Mammary epithelial cell (primary cell): ENCODE measurements at regions of chr15 and their contacts with region 1.

Region 1: GRCh38 chr15:84588053-84588874 is 12.5 kb upstream of the ZSCAN2 start:
- DNase-seq: peak; percentile 71
- H3K4me3 ChIP-seq: peak overlapping the region in 2 of 3 experiments; percentile 25 to 33
- H3K27ac ChIP-seq: no peak overlapping the region
- H3K4me1 ChIP-seq: peaks cover 13% of the 10 kb centered on the region
- H3K27me3 ChIP-seq: no peaks in the 10 kb centered on the region
- CTCF ChIP-seq: peak; percentile 36 to 81

Region 2: GRCh38 chr15:84633311-84634227 is 45.3 kb after region 1 on chr15:
- CTCF ChIA-PET with region 1: interaction called, 5 read pairs
- dilution Hi-C with region 1: no loop called
- in situ Hi-C with region 1: no loop called
- intact Hi-C with region 1: loop called (anchors 1 kb)
- DNase-seq: peak; percentile 79
- H3K4me3 ChIP-seq: peak overlapping the region; percentile 39 to 67 (median 66)
- H3K27ac ChIP-seq: peak overlapping the region; percentile 47
- H3K4me1 ChIP-seq: peaks cover 11% of the 10 kb centered on the region
- H3K27me3 ChIP-seq: no peaks in the 10 kb centered on the region
- CTCF ChIP-seq: no peak

Region 3: GRCh38 chr15:84871428-84872305 is 283.4 kb after region 1 on chr15:
- CTCF ChIA-PET with region 1: no interaction called
- dilution Hi-C with region 1: no loop called
- in situ Hi-C with region 1: loop called (anchors 10 to 25 kb)
- intact Hi-C with region 1: no loop called
- DNase-seq: no peak
- H3K4me3 ChIP-seq: no peak overlapping the region
- H3K27ac ChIP-seq: no peak overlapping the region
- H3K4me1 ChIP-seq: no peaks in the 10 kb centered on the region
- H3K27me3 ChIP-seq: no peaks in the 10 kb centered on the region
- CTCF ChIP-seq: no peak

Region 4: GRCh38 chr15:84929744-84930371 is 341.6 kb after region 1 on chr15:
- CTCF ChIA-PET with region 1: interaction called, 6 read pairs
- dilution Hi-C with region 1: no loop called
- in situ Hi-C with region 1: loop called in 1 of 2 experiments (anchors 10 kb)
- intact Hi-C with region 1: loop called (anchors 1 kb)
- DNase-seq: peak; percentile 98
- H3K4me3 ChIP-seq: no peak overlapping the region
- H3K27ac ChIP-seq: peak overlapping the region; percentile 11
- H3K4me1 ChIP-seq: peaks cover 13% of the 10 kb centered on the region
- H3K27me3 ChIP-seq: no peaks in the 10 kb centered on the region
- CTCF ChIP-seq: no peak

Region 5: DNA sequence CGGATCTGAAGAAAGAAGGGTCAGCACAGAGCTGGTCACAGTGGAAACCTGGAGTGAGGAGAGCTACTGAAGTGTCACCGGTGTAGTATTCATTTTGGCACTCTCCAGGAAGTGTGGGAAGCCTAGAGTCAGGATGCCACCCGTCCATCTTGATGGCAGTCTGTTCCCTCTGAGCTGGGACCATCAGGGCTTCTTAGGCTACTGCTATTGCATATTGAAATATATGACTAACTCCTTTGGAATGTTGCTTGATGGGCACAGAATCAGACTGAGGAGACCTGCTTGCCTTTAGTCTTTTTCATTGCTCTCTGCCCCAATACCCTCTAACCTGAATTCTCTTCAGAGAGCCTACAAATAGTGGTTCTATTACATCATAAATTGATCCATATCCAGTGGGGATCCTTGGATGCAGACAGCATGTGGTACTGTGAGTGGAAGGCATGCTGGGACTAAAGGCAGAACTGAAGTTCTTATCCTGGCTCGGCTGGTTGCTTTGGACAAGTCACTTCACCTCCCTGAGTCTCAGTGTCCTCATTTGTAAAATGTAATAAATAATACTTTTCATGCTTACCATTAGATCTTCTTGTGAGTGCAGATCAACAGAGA is 536.9 kb after region 1 on chr15:
- CTCF ChIA-PET with region 1: no interaction called
- dilution Hi-C with region 1: no loop called
- in situ Hi-C with region 1: loop called in 1 of 2 experiments (anchors 25 kb)
- intact Hi-C with region 1: no loop called
- DNase-seq: peak; percentile 41
- H3K4me3 ChIP-seq: no peak overlapping the region
- H3K27ac ChIP-seq: no peak overlapping the region
- H3K4me1 ChIP-seq: peaks cover 14% of the 10 kb centered on the region
- H3K27me3 ChIP-seq: no peaks in the 10 kb centered on the region
- CTCF ChIP-seq: no peak

Region 6: DNA sequence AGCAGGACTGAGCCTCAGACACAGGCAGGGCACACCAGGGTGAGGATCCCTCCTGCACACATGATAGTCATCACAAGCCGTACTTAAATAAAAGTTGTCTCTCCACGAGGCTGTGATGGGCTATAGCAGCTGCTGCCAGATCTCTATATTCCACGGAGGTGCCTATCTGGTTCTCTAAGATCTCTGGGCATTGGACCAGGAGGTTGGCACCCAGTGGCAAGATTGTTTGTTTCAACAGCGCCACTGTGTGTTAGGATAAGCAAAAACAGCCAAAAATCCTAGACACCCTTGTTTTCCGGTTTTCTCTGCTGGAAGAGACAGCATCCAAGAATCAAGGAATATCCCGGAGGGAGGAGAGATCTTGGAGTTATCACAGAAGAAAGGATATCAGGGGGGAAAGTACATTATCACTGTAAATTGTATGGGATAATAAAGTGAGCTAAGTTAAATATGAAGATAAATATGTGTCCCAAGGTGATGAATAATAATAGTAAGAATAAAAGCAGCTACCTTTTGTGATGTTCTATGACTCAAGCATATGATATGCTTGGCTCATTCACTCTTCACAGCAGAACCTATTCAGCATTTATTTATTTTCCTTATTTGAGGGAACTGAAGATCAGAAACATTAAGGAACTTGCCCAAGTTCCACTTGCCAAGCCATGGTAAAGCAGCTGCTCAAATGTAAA is 701.6 kb after region 1 on chr15:
- CTCF ChIA-PET with region 1: no interaction called
- dilution Hi-C with region 1: no loop called
- in situ Hi-C with region 1: no loop called
- intact Hi-C with region 1: loop called (anchors 5 kb)
- DNase-seq: peak; percentile 64
- H3K4me3 ChIP-seq: no peak overlapping the region
- H3K27ac ChIP-seq: no peak overlapping the region
- H3K4me1 ChIP-seq: peaks cover 7% of the 10 kb centered on the region
- H3K27me3 ChIP-seq: no peaks in the 10 kb centered on the region
- CTCF ChIP-seq: peak; percentile 72 to 74